Motor neuron (in vitro differentiated cells): ENCODE measurements at regions of chr14 and their contacts with region 1.

Region 1: DNA sequence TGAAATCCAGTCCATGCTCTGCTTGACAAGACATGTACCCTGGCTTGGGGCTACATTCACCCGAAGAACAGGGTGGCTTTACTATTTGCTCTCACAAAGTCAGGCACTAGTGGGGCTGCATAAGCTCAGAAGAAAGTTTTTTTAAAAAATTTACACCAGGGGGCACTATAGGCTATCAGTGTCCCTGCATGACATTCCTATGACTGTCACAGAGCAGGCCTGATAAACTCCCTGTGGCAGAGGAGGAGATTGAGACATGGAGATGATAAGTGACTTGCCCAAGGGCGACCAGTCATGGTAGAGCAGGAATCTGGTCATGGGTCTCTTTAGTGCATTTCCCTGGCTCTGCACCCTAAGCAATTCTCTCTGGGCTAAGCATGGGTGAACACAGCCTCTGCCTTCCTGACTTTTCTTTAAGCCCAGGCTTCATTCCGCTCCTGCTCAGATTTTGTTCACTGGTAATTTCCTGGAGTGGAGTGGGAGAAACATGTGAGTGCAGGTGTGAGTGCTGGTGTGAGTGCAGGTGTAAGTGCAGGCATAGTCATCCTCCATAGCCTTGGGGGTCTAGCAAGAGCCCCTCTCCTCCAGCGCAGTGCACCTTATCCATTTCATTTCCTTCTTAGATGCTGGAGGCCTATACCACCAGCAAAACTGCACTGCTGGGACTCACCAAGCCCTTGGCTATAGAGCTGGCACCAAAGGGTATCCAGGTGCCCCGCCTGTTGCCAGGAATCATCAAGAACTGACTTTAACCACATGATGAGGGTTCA is 91.6 kb downstream of the DHRS2 start:
- ATAC-seq: peak in 6 of 8 experiments; percentile 30 to 96 (median 67)
- H3K4me3 ChIP-seq: no peak overlapping the region
- H3K27ac ChIP-seq: no peak overlapping the region
- H3K4me1 ChIP-seq: no peaks in the 10 kb centered on the region

Region 2: GRCh38 chr14:23861666-23862065 is 133.9 kb after region 1 on chr14:
- in situ Hi-C with region 1: no loop called
- ATAC-seq: peak in 3 of 8 experiments; percentile 37 to 50 (median 38)
- H3K4me3 ChIP-seq: no peak overlapping the region
- H3K27ac ChIP-seq: no peak overlapping the region
- H3K4me1 ChIP-seq: no peaks in the 10 kb centered on the region

Region 3: DNA sequence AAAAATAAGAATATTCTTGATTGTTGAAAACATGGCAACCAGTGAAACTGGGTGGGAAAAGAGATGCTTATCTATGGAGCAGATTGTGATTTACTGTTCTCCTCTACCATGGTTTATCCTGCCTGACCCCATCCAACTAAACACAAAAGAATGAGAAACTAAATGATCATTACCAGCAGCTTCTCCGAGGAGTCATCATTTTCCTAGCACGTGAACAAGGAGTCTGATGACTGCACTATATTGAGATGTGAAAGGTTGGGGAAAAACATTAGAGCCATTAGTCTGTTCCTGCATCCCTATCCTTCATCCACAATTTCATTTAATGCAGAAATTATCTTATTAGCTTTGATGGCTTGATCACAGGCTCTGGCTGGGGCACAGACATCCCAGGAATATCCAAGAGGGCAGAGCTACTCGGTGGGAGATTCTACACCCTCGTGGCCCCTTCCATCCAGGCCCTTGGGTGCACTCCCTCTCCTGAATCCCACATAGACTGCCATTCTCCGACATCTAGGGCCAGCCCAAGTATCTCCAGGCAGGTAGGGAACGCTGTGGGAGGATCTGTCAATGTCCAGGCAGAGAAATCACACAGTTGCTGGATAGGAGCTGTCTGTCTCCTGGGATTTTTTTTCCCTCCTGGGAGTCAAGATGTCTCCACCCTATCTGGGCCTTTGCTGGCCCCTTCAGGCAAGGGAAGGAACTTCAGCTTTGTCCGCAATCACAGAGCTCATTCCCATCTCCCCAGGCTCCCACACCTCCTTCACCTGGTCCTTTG is 182.5 kb after region 1 on chr14:
- in situ Hi-C with region 1: loop called in 1 of 9 experiments (anchors 25 kb)
- ATAC-seq: peak; percentile 29 to 98 (median 84)
- H3K4me3 ChIP-seq: no peak overlapping the region
- H3K27ac ChIP-seq: no peak overlapping the region
- H3K4me1 ChIP-seq: peaks cover 0 to 3% of the 10 kb centered on the region in 2 donors